AG04450 (cell line): ENCODE measurements at regions of chr5 and their contacts with region 1.

Region 1: GRCh38 chr5:157476702-157477408 is 16.8 kb downstream of the NIPAL4 start:
- DNase-seq: peak; percentile 37
- H3K4me3 ChIP-seq: no peak overlapping the region
- H3K27ac ChIP-seq: no peak overlapping the region
- H3K27me3 ChIP-seq: no peaks in the 10 kb centered on the region
- CTCF ChIP-seq: peak; percentile 84

Region 2: DNA sequence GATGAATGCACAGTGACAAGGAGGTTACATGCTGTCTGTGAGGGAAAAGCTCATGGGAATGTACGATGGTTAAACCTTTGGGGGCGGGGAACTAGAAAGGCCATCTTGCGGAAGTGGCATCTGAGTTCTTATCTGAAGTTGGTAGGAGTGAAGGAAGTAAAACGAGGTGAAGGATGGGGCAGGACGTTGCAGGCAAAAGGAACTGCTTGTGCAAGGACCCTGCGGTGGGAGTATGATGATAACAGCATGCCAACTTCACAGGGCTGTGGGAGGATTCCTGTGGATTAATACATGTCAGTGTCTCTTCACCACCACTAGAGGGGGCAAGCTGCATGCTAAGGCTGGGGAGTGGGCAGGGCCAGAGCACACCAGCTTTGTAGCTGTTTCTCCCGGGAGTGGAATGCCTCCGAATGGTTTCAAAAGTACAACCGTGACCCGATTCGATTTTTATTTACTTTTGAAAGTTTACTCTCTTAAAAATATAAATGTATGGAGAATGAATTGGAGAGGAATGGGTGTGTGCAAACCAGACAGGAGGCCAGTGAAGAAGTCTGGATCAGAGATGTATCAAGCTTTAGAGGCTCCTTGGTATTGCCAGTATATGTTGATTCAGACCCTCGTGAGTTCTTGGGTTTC is 148.5 kb before region 1 on chr5:
- CTCF ChIA-PET with region 1: interaction called, 53 read pairs
- POLR2A ChIA-PET with region 1: no interaction called
- DNase-seq: peak; percentile 70
- H3K4me3 ChIP-seq: peak overlapping the region; percentile 33
- H3K27ac ChIP-seq: no peak overlapping the region
- H3K27me3 ChIP-seq: no peaks in the 10 kb centered on the region
- CTCF ChIP-seq: peak; percentile 99

Region 3: DNA sequence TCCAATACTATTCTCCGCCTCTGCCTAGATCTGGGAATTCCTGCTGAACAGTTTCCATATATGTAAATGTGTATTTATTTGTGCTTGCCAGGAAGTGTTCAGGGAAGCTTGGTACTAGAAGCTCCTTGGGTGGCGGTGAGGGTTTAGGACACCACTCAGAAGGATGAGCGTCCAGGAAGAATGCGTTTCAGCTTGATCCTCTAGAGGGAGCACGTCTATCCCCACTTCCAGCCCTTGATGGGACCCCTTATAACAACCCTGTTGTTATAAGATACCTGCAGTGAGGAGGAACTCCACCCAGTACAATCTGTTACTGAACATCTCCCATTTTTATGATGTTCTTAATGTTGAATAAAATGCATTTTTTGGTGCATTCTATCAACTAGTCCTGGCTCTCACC is 122.1 kb before region 1 on chr5:
- CTCF ChIA-PET with region 1: interaction called, 12 read pairs
- POLR2A ChIA-PET with region 1: no interaction called
- DNase-seq: no peak
- H3K4me3 ChIP-seq: no peak overlapping the region
- H3K27ac ChIP-seq: no peak overlapping the region
- H3K27me3 ChIP-seq: no peaks in the 10 kb centered on the region
- CTCF ChIP-seq: peak; percentile 41

Region 4: DNA sequence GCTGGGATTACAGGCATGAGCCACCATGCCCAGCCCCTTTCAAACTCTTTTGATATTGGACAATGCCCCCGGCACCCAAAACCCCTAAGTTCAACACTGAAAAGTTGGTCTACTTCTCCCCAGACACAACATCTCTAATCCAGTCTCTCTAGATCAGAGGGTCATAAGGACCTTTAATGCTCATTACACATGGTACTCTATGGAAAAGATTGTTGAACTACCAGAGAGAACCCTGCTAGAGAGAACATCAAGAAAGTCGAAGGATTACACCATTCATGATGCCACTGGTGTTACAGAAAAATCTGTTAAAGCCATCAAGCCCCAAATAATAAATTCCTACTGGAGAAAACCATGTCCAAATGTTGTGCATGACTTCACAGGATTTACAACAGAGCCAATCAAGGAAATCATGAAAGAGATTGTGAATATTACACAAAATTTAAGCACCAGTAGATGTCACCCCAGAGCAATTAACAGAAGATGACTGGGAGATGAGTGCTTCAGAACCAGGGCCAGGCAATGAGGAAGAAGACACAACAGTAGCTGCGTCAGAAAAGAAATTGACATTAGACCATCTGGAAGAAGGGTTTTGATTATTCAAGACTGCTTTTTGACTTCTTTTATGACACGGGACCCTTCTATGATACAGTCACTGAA is 45.2 kb before region 1 on chr5:
- CTCF ChIA-PET with region 1: interaction called, 42 read pairs
- POLR2A ChIA-PET with region 1: no interaction called
- DNase-seq: peak; percentile 24
- H3K4me3 ChIP-seq: no peak overlapping the region
- H3K27ac ChIP-seq: no peak overlapping the region
- H3K27me3 ChIP-seq: no peaks in the 10 kb centered on the region
- CTCF ChIP-seq: peak; percentile 57

Region 5: GRCh38 chr5:157511651-157512644 is 35.1 kb after region 1 on chr5:
- CTCF ChIA-PET with region 1: interaction called, 12 read pairs
- POLR2A ChIA-PET with region 1: no interaction called
- DNase-seq: peak; percentile 94
- H3K4me3 ChIP-seq: peak overlapping the region; percentile 15; the same call in 1 of the 2 replicates
- H3K27ac ChIP-seq: peak overlapping the region; percentile 96
- H3K27me3 ChIP-seq: no peaks in the 10 kb centered on the region
- CTCF ChIP-seq: no peak

Region 6: GRCh38 chr5:157563929-157564716 is 87.3 kb after region 1 on chr5:
- CTCF ChIA-PET with region 1: no interaction called
- POLR2A ChIA-PET with region 1: no interaction called
- DNase-seq: no peak
- H3K4me3 ChIP-seq: no peak overlapping the region
- H3K27ac ChIP-seq: peak overlapping the region; percentile 87
- H3K27me3 ChIP-seq: no peaks in the 10 kb centered on the region
- CTCF ChIP-seq: no peak

Region 7: GRCh38 chr5:157630341-157630740 is 153.5 kb after region 1 on chr5:
- CTCF ChIA-PET with region 1: no interaction called
- POLR2A ChIA-PET with region 1: no interaction called
- DNase-seq: no peak
- H3K4me3 ChIP-seq: no peak overlapping the region
- H3K27ac ChIP-seq: no peak overlapping the region
- H3K27me3 ChIP-seq: no peaks in the 10 kb centered on the region
- CTCF ChIP-seq: no peak

Region 8: DNA sequence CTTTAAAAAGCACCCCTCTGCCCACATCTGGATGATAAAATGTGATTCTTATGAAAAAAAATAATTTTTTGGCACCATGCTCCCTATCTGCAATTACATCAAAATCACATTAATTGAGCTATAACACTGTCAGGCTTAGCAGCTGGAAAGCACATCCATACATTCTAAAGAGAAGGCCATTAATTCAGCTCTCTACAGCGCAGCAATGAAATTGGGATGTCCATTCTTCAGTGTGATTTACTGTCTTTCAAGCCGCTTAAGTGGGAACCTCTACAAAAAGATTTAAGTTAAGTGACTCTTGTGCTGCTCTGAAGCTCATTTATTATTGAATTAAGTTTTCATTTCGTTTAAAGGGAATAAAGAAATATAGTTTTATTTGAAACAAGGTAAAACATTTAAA is 1451.5 kb after region 1 on chr5:
- CTCF ChIA-PET with region 1: no interaction called
- POLR2A ChIA-PET with region 1: no interaction called
- DNase-seq: no peak
- H3K4me3 ChIP-seq: no peak overlapping the region
- H3K27ac ChIP-seq: no peak overlapping the region
- H3K27me3 ChIP-seq: peaks cover 6% of the 10 kb centered on the region
- CTCF ChIP-seq: no peak